Activated T-helper 2 cell treated with anti-CD3 and anti-CD28 coated beads, Interferon-gamma antibody, Interleukin-2, Interleukin-4, amounts not matched to agents 10 μg/mL and 5 μg/mL and 100 μg/mL, durations not matched to agents 14 hours and 24 hours and 36 hours (primary cell): ENCODE measurements at regions of chr5 and their contacts with region 1.

Region 1: DNA sequence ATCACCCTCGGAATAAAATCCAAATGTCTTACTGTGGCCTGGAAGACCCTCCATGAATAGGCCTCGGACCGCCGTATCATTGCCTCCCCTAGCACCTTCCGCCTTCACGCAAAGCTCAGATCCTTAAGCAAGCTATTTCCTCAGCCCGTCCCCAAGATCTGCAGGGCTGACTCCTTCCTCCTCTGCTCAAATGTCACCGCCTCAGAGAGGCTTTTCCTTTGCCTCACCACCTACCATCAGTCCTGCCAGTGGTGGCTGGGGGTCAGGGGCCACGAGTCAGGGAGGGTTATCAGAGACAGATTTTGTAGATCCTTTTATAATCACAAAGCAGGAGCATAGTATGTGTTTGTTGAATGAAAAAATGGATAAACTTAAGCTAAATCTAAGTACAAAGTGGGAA is 74.4 kb upstream of the KIF2A start:
- DNase-seq: no peak
- H3K4me3 Mint-ChIP-seq: peak overlapping the region; percentile 9
- H3K27ac Mint-ChIP-seq: peak overlapping the region; percentile 62
- H3K4me1 Mint-ChIP-seq: peaks cover 66% of the 10 kb centered on the region
- H3K27me3 Mint-ChIP-seq: no peaks in the 10 kb centered on the region

Region 2: DNA sequence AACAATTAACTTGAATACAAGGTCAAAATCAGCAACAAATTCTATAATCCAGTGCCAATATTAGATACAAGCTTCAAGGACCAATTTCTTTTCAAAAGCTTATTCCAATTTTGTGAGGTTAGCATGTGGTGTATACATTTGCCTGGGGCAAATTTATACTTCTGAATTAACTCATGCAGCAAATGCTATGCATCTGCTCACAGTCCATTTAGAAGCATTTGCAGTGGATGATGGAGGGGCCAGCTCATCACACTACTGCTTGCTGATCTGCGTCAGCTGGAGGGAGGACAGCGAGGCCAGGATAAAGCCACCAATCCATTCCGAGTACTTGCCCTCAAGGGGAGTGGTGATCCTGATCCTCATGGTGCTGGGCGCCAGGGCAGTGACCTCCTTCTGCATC is 399.8 kb before region 1 on chr5:
- intact Hi-C with region 1: no loop called
- DNase-seq: no peak
- H3K4me3 Mint-ChIP-seq: no peak overlapping the region
- H3K27ac Mint-ChIP-seq: no peak overlapping the region
- H3K4me1 Mint-ChIP-seq: no peaks in the 10 kb centered on the region
- H3K27me3 Mint-ChIP-seq: peaks cover 2% of the 10 kb centered on the region

Region 3: GRCh38 chr5:62256161-62257019 is 24.8 kb after region 1 on chr5:
- intact Hi-C with region 1: loop called (anchors 2 kb)
- DNase-seq: peak; percentile 14
- H3K4me3 Mint-ChIP-seq: peak overlapping the region; percentile 63
- H3K27ac Mint-ChIP-seq: peak overlapping the region; percentile 94
- H3K4me1 Mint-ChIP-seq: peaks cover 75% of the 10 kb centered on the region
- H3K27me3 Mint-ChIP-seq: no peaks in the 10 kb centered on the region

Region 4: DNA sequence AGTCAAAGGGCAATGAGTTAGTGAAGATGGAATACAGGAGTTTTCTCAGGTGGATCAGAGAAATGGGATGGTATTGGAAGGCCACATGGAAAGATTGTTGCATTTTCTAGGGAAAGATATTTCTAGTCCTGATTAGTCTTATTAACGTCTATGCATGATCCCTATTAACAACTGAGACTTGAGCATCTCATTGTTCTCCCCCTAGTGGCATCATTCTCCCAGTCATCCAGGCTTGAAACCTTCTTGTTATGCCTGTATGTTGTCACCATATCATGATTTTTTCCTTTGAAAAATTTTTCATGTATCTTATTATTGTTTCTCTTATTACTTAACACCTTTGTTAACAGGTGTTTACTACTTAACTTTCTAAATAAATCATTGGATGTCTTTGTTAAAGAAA is 108.8 kb after region 1 on chr5:
- intact Hi-C with region 1: loop called (anchors 5 kb)
- DNase-seq: no peak
- H3K4me3 Mint-ChIP-seq: no peak overlapping the region
- H3K27ac Mint-ChIP-seq: peak overlapping the region; percentile 17
- H3K4me1 Mint-ChIP-seq: peaks cover 57% of the 10 kb centered on the region
- H3K27me3 Mint-ChIP-seq: no peaks in the 10 kb centered on the region